Activated naive CD4-positive, alpha-beta T cell treated with anti-CD3 and anti-CD28 coated beads for 36 hours (primary cell): ENCODE measurements at regions of chr10 and their contacts with region 1.

Region 1: DNA sequence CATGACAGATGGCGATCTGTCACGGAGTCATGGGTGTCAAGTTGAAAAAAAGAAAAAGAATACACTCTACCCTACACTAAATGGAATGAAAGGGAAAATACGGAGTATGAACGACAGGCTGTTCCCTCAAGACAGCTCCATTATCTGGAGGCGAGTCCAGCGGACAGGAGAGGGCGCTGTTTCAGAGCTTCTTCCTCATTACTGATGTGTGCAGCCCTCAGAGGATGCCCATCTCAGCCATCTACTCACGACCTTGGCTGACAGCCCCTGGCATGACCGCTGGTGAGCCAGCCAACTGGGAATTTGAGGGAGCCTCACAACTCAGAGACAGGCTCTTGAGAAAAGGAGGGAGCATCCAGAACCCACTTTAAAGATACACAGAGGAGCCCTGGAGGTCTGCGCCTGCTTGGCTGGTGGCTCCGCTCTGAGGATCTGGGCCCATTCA is 49.6 kb upstream of the SMNDC1 start:
- DNase-seq: peak; percentile 98
- H3K4me3 Mint-ChIP-seq: peak overlapping the region; percentile 74
- H3K27ac Mint-ChIP-seq: peak overlapping the region; percentile 99
- H3K4me1 Mint-ChIP-seq: peaks cover 60% of the 10 kb centered on the region
- H3K27me3 Mint-ChIP-seq: no peaks in the 10 kb centered on the region

Region 2: GRCh38 chr10:110137142-110137545 is 217.2 kb before region 1 on chr10:
- CTCF ChIA-PET with region 1: no interaction called
- intact Hi-C with region 1: loop called (anchors 5 kb)
- DNase-seq: no peak
- H3K4me3 Mint-ChIP-seq: no peak overlapping the region
- H3K27ac Mint-ChIP-seq: peak overlapping the region; percentile 17
- H3K4me1 Mint-ChIP-seq: peaks cover 39% of the 10 kb centered on the region
- H3K27me3 Mint-ChIP-seq: no peaks in the 10 kb centered on the region

Region 3: GRCh38 chr10:110324201-110324804 is 30.0 kb before region 1 on chr10:
- CTCF ChIA-PET with region 1: interaction called, 4 read pairs
- intact Hi-C with region 1: loop called (anchors 1 kb)
- DNase-seq: no peak
- H3K4me3 Mint-ChIP-seq: no peak overlapping the region
- H3K27ac Mint-ChIP-seq: peak overlapping the region; percentile 84
- H3K4me1 Mint-ChIP-seq: peaks cover 37% of the 10 kb centered on the region
- H3K27me3 Mint-ChIP-seq: peaks cover 2% of the 10 kb centered on the region

Region 4: GRCh38 chr10:110408203-110408751 is 53.9 kb after region 1 on chr10:
- CTCF ChIA-PET with region 1: interaction called, 36 read pairs
- intact Hi-C with region 1: no loop called
- DNase-seq: no peak
- H3K4me3 Mint-ChIP-seq: no peak overlapping the region
- H3K27ac Mint-ChIP-seq: no peak overlapping the region
- H3K4me1 Mint-ChIP-seq: peaks cover 31% of the 10 kb centered on the region
- H3K27me3 Mint-ChIP-seq: no peaks in the 10 kb centered on the region

Region 5: DNA sequence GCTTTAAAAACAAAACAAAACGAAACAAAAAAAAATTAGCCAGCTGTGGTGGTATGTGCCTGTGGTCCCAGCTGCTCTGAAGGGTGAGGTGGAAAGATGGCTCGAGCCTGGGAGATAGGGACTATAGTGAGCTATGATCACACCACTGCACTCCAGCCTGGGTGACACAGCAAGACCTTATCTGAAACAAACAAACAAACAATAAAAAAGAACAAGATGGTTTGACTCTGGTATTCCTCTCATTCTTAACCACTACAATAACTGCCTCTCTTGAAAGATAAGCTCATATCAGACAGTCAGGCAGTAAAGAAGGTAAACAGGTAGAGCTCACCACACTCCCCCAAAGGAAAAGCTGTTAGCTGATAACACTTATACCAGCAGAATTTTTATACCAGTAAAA is 129.3 kb after region 1 on chr10:
- CTCF ChIA-PET with region 1: interaction called, 10 read pairs
- intact Hi-C with region 1: no loop called
- DNase-seq: no peak
- H3K4me3 Mint-ChIP-seq: no peak overlapping the region
- H3K27ac Mint-ChIP-seq: no peak overlapping the region
- H3K4me1 Mint-ChIP-seq: peaks cover 10% of the 10 kb centered on the region
- H3K27me3 Mint-ChIP-seq: peaks cover 2% of the 10 kb centered on the region

Region 6: GRCh38 chr10:110535958-110536891 is 181.9 kb after region 1 on chr10:
- CTCF ChIA-PET with region 1: interaction called, 13 read pairs
- intact Hi-C with region 1: loop called (anchors 1 kb)
- DNase-seq: peak; percentile 90
- H3K4me3 Mint-ChIP-seq: no peak overlapping the region
- H3K27ac Mint-ChIP-seq: peak overlapping the region; percentile 54
- H3K4me1 Mint-ChIP-seq: peaks cover 22% of the 10 kb centered on the region
- H3K27me3 Mint-ChIP-seq: no peaks in the 10 kb centered on the region

Region 7: DNA sequence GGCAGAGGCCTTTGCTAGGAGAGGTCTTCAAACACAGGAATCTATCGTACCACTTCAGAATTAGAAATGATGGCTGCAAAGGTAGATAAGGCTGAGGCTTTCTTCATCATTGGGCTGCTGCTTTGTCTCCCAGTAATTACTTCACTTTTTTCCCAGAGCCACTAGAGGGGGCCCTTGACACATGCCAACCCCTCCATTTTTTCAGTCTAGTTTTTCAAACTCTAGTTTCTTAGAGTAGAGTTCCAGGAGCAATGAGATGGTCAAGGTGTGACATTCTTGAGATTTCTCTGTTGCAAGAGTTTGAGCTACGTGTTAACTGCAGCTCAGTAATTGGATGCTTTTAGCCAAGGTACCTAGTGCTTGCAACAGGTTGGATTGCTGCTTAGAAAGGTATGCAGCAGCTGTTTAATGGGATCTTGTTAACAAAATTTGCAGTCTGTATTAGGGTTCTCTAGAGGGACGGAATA is 256.0 kb after region 1 on chr10:
- CTCF ChIA-PET with region 1: no interaction called
- intact Hi-C with region 1: no loop called
- DNase-seq: peak; percentile 75
- H3K4me3 Mint-ChIP-seq: no peak overlapping the region
- H3K27ac Mint-ChIP-seq: no peak overlapping the region
- H3K4me1 Mint-ChIP-seq: peaks cover 26% of the 10 kb centered on the region
- H3K27me3 Mint-ChIP-seq: no peaks in the 10 kb centered on the region